Naive thymus-derived CD4-positive, alpha-beta T cell (primary cell): ENCODE measurements at regions of chr3 and their contacts with region 1.

Region 1: DNA sequence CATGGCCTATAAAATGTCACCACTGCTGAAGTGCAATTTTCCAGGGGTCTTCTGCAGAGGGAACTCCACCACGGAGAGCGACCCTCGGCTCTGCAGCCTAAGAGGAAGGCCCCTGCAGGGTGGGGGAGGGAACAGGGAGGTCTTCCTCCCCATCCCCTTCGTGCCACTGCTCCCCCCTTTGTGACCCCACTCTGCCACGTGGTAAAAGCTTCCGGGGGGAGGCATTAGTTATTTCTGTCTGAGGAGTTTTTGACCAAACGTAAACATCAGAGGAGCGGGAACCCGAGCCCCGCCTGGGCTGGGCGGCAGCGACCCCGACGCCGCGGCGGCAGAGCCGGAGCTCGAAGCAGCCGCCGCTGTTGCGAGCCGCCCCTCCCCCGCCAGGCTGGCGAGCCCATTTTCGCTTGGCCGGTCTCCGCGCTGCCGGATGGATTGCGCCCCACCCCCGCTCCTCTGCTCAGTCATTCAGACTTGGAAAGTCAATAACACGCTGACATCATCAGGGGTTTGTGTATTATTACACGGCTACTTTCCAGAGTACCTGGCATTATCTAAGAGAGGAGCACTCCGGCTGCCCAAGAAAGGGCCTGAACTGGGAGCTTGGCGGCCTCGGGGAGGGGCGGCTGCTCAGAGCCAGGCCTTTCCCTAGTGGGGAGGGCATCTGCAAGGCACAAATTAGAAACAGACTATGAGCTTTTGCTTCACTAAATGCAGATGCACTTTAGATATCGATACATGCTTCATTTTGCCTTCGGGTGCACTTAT is 162.5 kb upstream of the TBL1XR1 start:
- DNase-seq: peak; percentile 95 to 98 (median 96)
- ATAC-seq: peak; percentile 92
- H3K4me3 ChIP-seq: peak overlapping the region; percentile 75
- H3K4me3 Mint-ChIP-seq: peak overlapping the region; percentile 77 to 98 (median 94)
- H3K27ac ChIP-seq: peak overlapping the region; percentile 90
- H3K27ac Mint-ChIP-seq: peak overlapping the region; percentile 96 to 100 (median 98)
- H3K4me1 ChIP-seq: peaks cover 31 to 34% of the 10 kb centered on the region in 2 donors
- H3K4me1 Mint-ChIP-seq: peaks cover 28 to 63% (median 54%) of the 10 kb centered on the region in 7 donors
- H3K27me3 ChIP-seq: no peaks in the 10 kb centered on the region
- H3K27me3 Mint-ChIP-seq: peaks cover 0 to 2% (median 0%) of the 10 kb centered on the region in 5 donors

Region 2: DNA sequence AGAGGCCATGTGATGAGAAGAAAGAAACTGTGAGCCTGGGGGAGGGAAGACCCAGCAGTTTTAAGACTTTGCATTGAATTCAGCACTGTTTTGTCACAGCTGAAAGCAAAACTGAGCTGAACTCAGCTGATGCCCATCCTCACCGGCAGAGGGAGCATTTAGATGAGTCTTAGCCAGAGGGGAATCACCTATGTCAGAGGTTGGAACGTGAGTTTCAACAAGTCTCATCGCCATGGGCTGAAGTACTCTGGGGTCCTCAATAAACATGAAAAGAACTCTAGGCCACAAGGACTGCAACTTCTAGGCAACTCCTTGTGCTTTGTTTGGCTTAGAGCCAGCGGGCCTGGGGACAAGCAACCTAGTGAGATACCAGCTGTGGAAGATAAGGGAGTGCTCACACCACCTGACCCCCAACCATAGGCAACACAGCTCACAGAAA is 487.0 kb before region 1 on chr3:
- CTCF ChIA-PET with region 1: no interaction called
- POLR2A ChIA-PET with region 1: no interaction called
- intact Hi-C with region 1: loop called in 1 of 2 experiments (anchors 1 kb)
- DNase-seq: peak; percentile 10 to 61 (median 39)
- ATAC-seq: peak; percentile 83
- H3K4me3 ChIP-seq: no peak overlapping the region
- H3K4me3 Mint-ChIP-seq: no peak overlapping the region
- H3K27ac ChIP-seq: no peak overlapping the region
- H3K27ac Mint-ChIP-seq: peak overlapping the region in 3 of 9 donors; percentile 8 to 63 (median 26)
- H3K4me1 ChIP-seq: no peaks in the 10 kb centered on the region
- H3K4me1 Mint-ChIP-seq: peaks cover 0 to 9% (median 6%) of the 10 kb centered on the region in 7 donors
- H3K27me3 ChIP-seq: no peaks in the 10 kb centered on the region
- H3K27me3 Mint-ChIP-seq: peaks cover 0 to 11% (median 3%) of the 10 kb centered on the region in 5 donors

Region 3: GRCh38 chr3:177284383-177284881 is 75.3 kb before region 1 on chr3:
- CTCF ChIA-PET with region 1: no interaction called
- POLR2A ChIA-PET with region 1: no interaction called
- intact Hi-C with region 1: loop called (anchors 2 to 5 kb)
- DNase-seq: peak in 7 of 9 donors; percentile 1 to 25 (median 10)
- ATAC-seq: peak; percentile 62
- H3K4me3 ChIP-seq: no peak overlapping the region
- H3K4me3 Mint-ChIP-seq: peak overlapping the region in 9 of 10 donors; percentile 3 to 74 (median 47)
- H3K27ac ChIP-seq: no peak overlapping the region
- H3K27ac Mint-ChIP-seq: peak overlapping the region in 8 of 9 donors; percentile 6 to 86 (median 58)
- H3K4me1 ChIP-seq: peaks cover 0 to 22% of the 10 kb centered on the region in 2 donors
- H3K4me1 Mint-ChIP-seq: peaks cover 22 to 39% (median 30%) of the 10 kb centered on the region in 7 donors
- H3K27me3 ChIP-seq: no peaks in the 10 kb centered on the region
- H3K27me3 Mint-ChIP-seq: no peaks in the 10 kb centered on the region

Region 4: GRCh38 chr3:177426878-177427495 is 67.2 kb after region 1 on chr3:
- CTCF ChIA-PET with region 1: no interaction called
- POLR2A ChIA-PET with region 1: no interaction called
- intact Hi-C with region 1: loop called (anchors 1 to 10 kb)
- DNase-seq: peak in 6 of 9 donors; percentile 5 to 50 (median 19)
- ATAC-seq: peak; percentile 88
- H3K4me3 ChIP-seq: peak overlapping the region; percentile 7
- H3K4me3 Mint-ChIP-seq: peak overlapping the region; percentile 14 to 77 (median 47)
- H3K27ac ChIP-seq: no peak overlapping the region
- H3K27ac Mint-ChIP-seq: peak overlapping the region; percentile 3 to 85 (median 52)
- H3K4me1 ChIP-seq: peaks cover 7 to 17% of the 10 kb centered on the region in 2 donors
- H3K4me1 Mint-ChIP-seq: peaks cover 13 to 38% (median 23%) of the 10 kb centered on the region in 7 donors
- H3K27me3 ChIP-seq: no peaks in the 10 kb centered on the region
- H3K27me3 Mint-ChIP-seq: peaks cover 0 to 12% (median 0%) of the 10 kb centered on the region in 5 donors

Region 5: GRCh38 chr3:177597311-177598096 is 237.7 kb after region 1 on chr3:
- CTCF ChIA-PET with region 1: interaction called, 3 read pairs
- POLR2A ChIA-PET with region 1: interaction called, 9 read pairs
- intact Hi-C with region 1: loop called (anchors 1 to 5 kb)
- DNase-seq: peak in 7 of 9 donors; percentile 36 to 75 (median 65)
- ATAC-seq: peak; percentile 93
- H3K4me3 ChIP-seq: peak overlapping the region; percentile 21
- H3K4me3 Mint-ChIP-seq: peak overlapping the region; percentile 51 to 80 (median 72)
- H3K27ac ChIP-seq: peak overlapping the region; percentile 54
- H3K27ac Mint-ChIP-seq: peak overlapping the region; percentile 77 to 97 (median 91)
- H3K4me1 ChIP-seq: peaks cover 39 to 50% of the 10 kb centered on the region in 2 donors
- H3K4me1 Mint-ChIP-seq: peaks cover 51 to 87% (median 83%) of the 10 kb centered on the region in 7 donors
- H3K27me3 ChIP-seq: no peaks in the 10 kb centered on the region
- H3K27me3 Mint-ChIP-seq: no peaks in the 10 kb centered on the region

Region 6: DNA sequence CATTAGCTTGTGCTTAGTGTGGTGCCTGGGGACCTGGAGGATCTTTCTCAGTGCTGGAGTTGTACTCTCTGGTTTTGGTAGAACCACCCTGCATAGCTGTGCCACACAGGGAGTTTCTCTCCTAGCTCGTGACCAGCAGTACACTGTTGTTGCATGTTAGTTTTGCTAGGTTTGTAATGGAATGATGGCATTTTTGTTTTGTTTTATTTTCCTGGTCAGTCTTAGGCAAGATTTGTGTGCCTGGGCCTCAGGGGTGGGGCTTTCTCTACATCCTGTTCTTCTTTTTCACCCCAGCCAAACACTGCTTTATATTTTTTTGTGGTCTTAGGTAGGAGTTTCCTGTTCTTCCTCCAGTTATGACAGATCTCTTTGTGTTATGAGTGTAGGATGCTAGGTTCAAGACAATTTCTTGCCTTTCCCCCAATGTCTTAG is 641.9 kb after region 1 on chr3:
- CTCF ChIA-PET with region 1: no interaction called
- POLR2A ChIA-PET with region 1: no interaction called
- intact Hi-C with region 1: loop called in 1 of 2 experiments (anchors 1 kb)
- DNase-seq: peak in 7 of 9 donors; percentile 19 to 51 (median 41)
- ATAC-seq: peak; percentile 79
- H3K4me3 ChIP-seq: peak overlapping the region; percentile 0
- H3K4me3 Mint-ChIP-seq: peak overlapping the region; percentile 58 to 83 (median 72)
- H3K27ac ChIP-seq: peak overlapping the region; percentile 55
- H3K27ac Mint-ChIP-seq: peak overlapping the region; percentile 81 to 95 (median 84)
- H3K4me1 ChIP-seq: peaks cover 12 to 43% of the 10 kb centered on the region in 2 donors
- H3K4me1 Mint-ChIP-seq: peaks cover 45 to 69% (median 66%) of the 10 kb centered on the region in 7 donors
- H3K27me3 ChIP-seq: no peaks in the 10 kb centered on the region
- H3K27me3 Mint-ChIP-seq: no peaks in the 10 kb centered on the region